Dendritic cell treated with granulocyte-macrophage colony-stimulating factor and Interleukin-4, amounts not matched to agents 40 ng/mL and 50 ng/mL, for 4 days (primary cell): ENCODE measurements at regions of chr3 and their contacts with region 1.

Region 1: DNA sequence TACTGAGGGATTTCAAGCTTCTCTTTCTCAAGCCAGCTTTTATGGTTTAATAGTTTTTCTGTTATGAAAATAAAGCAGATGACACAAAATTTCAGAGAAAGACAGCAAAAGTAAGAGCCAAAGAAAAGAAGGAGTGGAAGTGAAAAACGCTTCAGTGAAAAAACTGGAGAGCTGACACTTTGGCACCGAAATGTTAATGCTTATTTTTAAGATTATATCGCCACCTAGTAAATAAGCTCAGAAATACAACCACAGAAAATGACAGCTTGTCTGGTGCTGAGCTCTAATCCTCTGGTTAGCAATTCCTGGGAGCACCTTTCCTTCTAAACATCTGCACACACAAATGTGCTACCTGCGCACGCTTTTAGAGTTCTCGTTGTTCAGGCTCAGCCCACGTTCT is 101.6 kb downstream of the ZPLD1 start:
- H3K4me3 Mint-ChIP-seq: no peak overlapping the region
- H3K27ac Mint-ChIP-seq: no peak overlapping the region
- H3K4me1 Mint-ChIP-seq: peaks cover 8% of the 10 kb centered on the region
- H3K27me3 Mint-ChIP-seq: no peaks in the 10 kb centered on the region

Region 2: DNA sequence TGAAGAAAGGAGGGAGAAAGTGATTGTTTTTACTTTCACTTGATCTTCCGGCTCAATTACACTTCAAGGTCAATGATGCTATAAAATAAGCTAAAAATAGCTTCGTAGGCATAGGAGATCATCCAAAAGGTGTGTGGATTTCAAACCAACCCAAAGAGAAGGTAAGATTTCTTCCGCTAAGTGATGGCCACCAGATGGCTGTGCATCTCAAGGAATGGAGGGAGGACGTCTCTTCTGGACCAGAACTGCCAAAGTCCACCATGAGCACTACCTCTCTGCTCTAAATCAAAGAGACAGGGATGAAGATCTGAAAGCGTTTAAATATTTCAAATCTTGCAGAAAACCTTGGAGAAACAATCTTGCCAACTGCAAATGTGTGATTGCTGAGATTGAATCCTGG is 300.8 kb before region 1 on chr3:
- intact Hi-C with region 1: loop called (anchors 2 kb)
- H3K4me3 Mint-ChIP-seq: no peak overlapping the region
- H3K27ac Mint-ChIP-seq: no peak overlapping the region
- H3K4me1 Mint-ChIP-seq: no peaks in the 10 kb centered on the region
- H3K27me3 Mint-ChIP-seq: no peaks in the 10 kb centered on the region

Region 3: DNA sequence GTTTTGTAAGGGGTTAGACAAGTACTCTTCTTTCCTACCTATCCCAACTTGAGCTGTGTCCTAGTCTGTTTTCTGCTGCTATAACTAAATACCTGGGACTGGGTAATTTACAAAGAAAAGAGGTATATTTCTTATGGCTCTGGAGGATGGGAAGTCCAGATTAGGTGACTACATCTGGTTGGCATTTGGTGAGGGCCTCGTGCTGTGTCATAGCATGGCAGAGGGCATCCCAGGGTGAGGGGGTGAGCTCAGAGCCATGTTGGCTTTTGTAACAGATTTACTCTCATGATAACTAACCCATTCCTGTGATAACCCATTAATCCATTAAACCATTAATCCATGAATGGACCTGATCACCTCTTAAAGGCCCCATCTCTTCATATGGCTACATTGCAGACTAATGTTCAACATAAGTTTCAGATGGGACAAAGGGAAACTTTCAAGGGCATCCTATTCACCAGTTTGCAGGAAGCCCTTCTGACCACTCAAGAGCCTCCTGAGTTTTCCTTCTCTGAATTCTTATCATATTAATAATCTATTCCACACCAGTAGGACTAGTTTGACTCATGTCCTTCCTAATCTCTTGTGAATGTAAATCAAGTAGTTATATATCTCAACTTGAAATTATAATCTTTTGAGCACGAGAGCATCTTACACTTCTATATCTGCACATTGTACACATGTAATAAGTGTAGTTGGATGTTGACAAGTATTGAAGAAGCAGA is 287.3 kb before region 1 on chr3:
- intact Hi-C with region 1: no loop called
- H3K4me3 Mint-ChIP-seq: no peak overlapping the region
- H3K27ac Mint-ChIP-seq: no peak overlapping the region
- H3K4me1 Mint-ChIP-seq: no peaks in the 10 kb centered on the region
- H3K27me3 Mint-ChIP-seq: peaks cover 2% of the 10 kb centered on the region